Naive thymus-derived CD4-positive, alpha-beta T cell (primary cell): ENCODE measurements at regions of chrX and their contacts with region 1.

Region 1: GRCh38 chrX:148159796-148160195 is 178.7 kb downstream of the FMR1NB start:
- DNase-seq: no peak
- ATAC-seq: no peak
- H3K4me3 ChIP-seq: no peak overlapping the region
- H3K4me3 Mint-ChIP-seq: no peak overlapping the region
- H3K27ac ChIP-seq: no peak overlapping the region
- H3K27ac Mint-ChIP-seq: no peak overlapping the region
- H3K4me1 ChIP-seq: no peaks in the 10 kb centered on the region
- H3K4me1 Mint-ChIP-seq: no peaks in the 10 kb centered on the region
- H3K27me3 ChIP-seq: no peaks in the 10 kb centered on the region
- H3K27me3 Mint-ChIP-seq: no peaks in the 10 kb centered on the region

Region 2: DNA sequence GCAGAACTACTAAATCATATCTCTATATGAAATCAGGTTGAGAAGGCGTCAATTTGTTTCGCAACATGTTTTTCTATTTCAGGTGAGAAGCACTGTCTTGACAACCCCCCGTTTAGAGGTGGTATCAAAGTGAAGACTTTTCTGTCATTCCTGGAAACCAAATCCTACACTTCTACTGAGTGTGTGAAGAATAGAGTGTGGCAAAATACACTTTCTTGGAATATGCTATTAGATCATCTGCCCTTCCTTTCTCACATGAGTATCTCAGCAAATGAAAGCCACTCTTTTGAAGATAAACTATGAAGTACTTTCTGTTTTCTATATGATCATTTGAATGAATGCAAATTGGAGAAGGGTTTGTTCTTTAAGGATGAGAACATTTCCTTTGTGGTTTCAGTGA is 422.1 kb before region 1 on chrX:
- CTCF ChIA-PET with region 1: no interaction called
- POLR2A ChIA-PET with region 1: no interaction called
- intact Hi-C with region 1: no loop called
- DNase-seq: no peak
- ATAC-seq: no peak
- H3K4me3 ChIP-seq: no peak overlapping the region
- H3K4me3 Mint-ChIP-seq: peak overlapping the region in 2 of 10 donors; percentile 8 to 68
- H3K27ac ChIP-seq: no peak overlapping the region
- H3K27ac Mint-ChIP-seq: peak overlapping the region in 1 of 9 donors; percentile 89
- H3K4me1 ChIP-seq: no peaks in the 10 kb centered on the region
- H3K4me1 Mint-ChIP-seq: peaks cover 2 to 37% (median 10%) of the 10 kb centered on the region in 7 donors
- H3K27me3 ChIP-seq: no peaks in the 10 kb centered on the region
- H3K27me3 Mint-ChIP-seq: no peaks in the 10 kb centered on the region

Region 3: DNA sequence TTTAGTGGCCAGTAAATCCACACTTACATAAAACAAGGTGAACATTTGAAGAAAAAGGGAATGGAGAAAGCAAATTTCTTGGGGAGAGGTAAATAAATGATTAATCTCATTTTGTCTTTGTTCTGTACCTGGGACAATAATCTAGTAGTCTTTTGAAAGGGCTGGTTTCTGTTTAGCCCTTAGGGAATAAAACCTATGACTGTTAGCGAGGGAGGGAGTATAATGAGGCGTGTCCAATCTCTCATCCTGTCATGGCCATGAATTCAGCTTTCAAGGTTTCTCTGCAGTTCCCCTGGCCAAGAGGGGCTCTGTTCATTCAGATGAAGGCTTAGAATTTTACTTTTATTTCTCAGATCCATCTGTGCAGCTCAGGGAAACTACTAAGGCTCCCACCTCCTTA is 260.1 kb before region 1 on chrX:
- CTCF ChIA-PET with region 1: no interaction called
- POLR2A ChIA-PET with region 1: no interaction called
- intact Hi-C with region 1: no loop called
- DNase-seq: no peak
- ATAC-seq: no peak
- H3K4me3 ChIP-seq: no peak overlapping the region
- H3K4me3 Mint-ChIP-seq: no peak overlapping the region
- H3K27ac ChIP-seq: no peak overlapping the region
- H3K27ac Mint-ChIP-seq: no peak overlapping the region
- H3K4me1 ChIP-seq: peaks cover 0 to 8% of the 10 kb centered on the region in 2 donors
- H3K4me1 Mint-ChIP-seq: peaks cover 0 to 15% (median 4%) of the 10 kb centered on the region in 7 donors
- H3K27me3 ChIP-seq: no peaks in the 10 kb centered on the region
- H3K27me3 Mint-ChIP-seq: peaks cover 0 to 11% (median 0%) of the 10 kb centered on the region in 5 donors

Region 4: DNA sequence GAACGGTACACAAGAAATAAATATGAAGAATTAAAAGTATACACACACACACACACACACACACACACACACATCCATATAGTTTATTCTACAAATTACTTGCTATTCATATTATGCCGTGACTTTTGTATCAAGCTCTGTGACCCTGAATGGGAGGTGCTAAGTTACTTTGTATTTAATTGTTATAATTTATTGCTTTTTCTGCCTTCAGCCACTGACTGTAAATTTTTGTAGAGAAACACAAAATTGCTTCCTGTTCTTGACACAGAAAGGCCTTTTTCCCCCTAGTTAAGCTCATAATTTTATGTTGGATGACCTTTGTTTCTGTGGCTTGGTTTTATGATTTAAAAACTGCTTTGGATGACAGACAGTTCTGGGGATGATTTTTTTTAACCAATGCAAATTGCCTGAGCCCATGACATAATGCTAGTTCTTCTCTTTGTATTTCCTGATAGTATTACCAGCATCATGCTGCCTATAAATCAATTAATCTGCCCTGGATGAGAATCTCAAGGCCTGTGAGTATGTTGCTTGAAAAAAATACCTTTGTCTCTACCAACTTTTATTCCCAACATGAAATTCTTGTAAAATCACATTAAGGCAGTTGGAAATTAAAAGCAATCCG is 38.7 kb before region 1 on chrX:
- CTCF ChIA-PET with region 1: no interaction called
- POLR2A ChIA-PET with region 1: no interaction called
- intact Hi-C with region 1: loop called in 1 of 2 experiments (anchors 5 kb)
- DNase-seq: no peak
- ATAC-seq: no peak
- H3K4me3 ChIP-seq: no peak overlapping the region
- H3K4me3 Mint-ChIP-seq: no peak overlapping the region
- H3K27ac ChIP-seq: no peak overlapping the region
- H3K27ac Mint-ChIP-seq: no peak overlapping the region
- H3K4me1 ChIP-seq: no peaks in the 10 kb centered on the region
- H3K4me1 Mint-ChIP-seq: no peaks in the 10 kb centered on the region
- H3K27me3 ChIP-seq: no peaks in the 10 kb centered on the region
- H3K27me3 Mint-ChIP-seq: peaks cover 0 to under 1% (median 0%) of the 10 kb centered on the region in 5 donors

Region 5: GRCh38 chrX:148146121-148146520 is 13.7 kb before region 1 on chrX:
- CTCF ChIA-PET with region 1: no interaction called
- POLR2A ChIA-PET with region 1: no interaction called
- intact Hi-C with region 1: no loop called
- DNase-seq: no peak
- ATAC-seq: no peak
- H3K4me3 ChIP-seq: no peak overlapping the region
- H3K4me3 Mint-ChIP-seq: no peak overlapping the region
- H3K27ac ChIP-seq: no peak overlapping the region
- H3K27ac Mint-ChIP-seq: no peak overlapping the region
- H3K4me1 ChIP-seq: no peaks in the 10 kb centered on the region
- H3K4me1 Mint-ChIP-seq: no peaks in the 10 kb centered on the region
- H3K27me3 ChIP-seq: no peaks in the 10 kb centered on the region
- H3K27me3 Mint-ChIP-seq: no peaks in the 10 kb centered on the region

Region 6: GRCh38 chrX:148333989-148334388 is 174.2 kb after region 1 on chrX:
- CTCF ChIA-PET with region 1: no interaction called
- POLR2A ChIA-PET with region 1: no interaction called
- intact Hi-C with region 1: no loop called
- DNase-seq: peak in 7 of 9 donors; percentile 8 to 72 (median 47)
- ATAC-seq: peak; percentile 73
- H3K4me3 ChIP-seq: no peak overlapping the region
- H3K4me3 Mint-ChIP-seq: peak overlapping the region; percentile 18 to 81 (median 70)
- H3K27ac ChIP-seq: peak overlapping the region; percentile 58
- H3K27ac Mint-ChIP-seq: peak overlapping the region; percentile 85 to 98 (median 92)
- H3K4me1 ChIP-seq: peaks cover 11 to 45% of the 10 kb centered on the region in 2 donors
- H3K4me1 Mint-ChIP-seq: peaks cover 17 to 93% (median 74%) of the 10 kb centered on the region in 7 donors
- H3K27me3 ChIP-seq: no peaks in the 10 kb centered on the region
- H3K27me3 Mint-ChIP-seq: no peaks in the 10 kb centered on the region